Posterior cingulate gyrus (tissue), 11 donors: ENCODE measurements at regions of chr11 and their contacts with region 1.

Region 1: GRCh38 chr11:95067039-95067840 is 521 bp downstream of the SRSF8 start:
- DNase-seq: peak; percentile 73 to 97 (median 84)

Region 2: GRCh38 chr11:94948070-94948617 is 119.1 kb before region 1 on chr11:
- intact Hi-C with region 1: no loop called
- DNase-seq: no peak

Region 3: GRCh38 chr11:94973099-94973968 is 93.9 kb before region 1 on chr11 and contains the starts of genes CWC15 and KDM4D:
- intact Hi-C with region 1: loop called (anchors 5 kb)
- DNase-seq: peak; percentile 92 to 99 (median 96)

Region 4: DNA sequence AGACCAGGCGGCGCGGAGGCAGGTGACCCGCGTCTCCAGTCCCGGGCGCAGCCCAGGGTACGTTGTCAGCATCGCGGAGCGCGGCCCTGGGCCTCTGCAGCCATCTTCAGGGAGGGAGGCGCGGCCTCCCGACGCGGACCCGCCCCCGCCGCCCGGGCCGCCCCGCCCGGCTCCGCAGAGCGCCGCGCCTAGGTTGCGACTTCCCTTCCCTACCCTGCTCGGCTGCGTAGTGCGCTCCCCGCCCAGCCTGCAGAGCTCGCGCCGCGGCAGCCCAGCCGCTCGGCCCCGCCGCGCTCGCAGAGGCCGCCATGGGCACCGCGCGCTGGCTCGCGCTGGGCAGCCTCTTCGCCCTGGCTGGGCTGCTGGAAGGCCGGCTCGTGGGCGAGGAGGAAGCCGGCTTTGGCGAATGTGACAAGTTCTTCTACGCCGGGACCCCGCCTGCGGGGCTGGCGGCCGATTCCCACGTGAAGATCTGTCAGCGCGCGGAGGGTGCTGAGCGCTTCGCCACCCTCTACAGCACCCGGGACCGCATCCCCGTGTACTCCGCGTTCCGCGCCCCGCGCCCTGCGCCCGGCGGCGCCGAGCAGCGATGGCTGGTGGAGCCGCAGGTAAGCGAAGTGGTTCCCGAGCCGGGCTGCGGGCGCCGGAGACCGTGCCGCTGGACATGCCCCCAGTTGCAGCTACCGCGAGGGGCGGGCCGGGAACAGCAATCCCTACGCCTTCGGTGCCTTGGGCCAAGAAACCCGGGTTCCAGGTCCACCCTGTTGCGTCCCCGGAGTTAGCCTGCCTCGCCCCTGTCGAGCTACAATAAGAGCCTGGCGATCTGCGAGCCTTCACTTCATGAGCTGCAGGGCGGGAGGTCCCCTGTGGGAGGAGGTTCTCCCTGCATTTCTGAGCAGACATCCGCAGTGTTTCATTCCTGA is 22.6 kb after region 1 on chr11 and contains the start of gene ENDOD1:
- intact Hi-C with region 1: loop called (anchors 1 kb)
- DNase-seq: peak; percentile 74 to 98 (median 80)

Region 5: GRCh38 chr11:95165638-95166037 is 98.4 kb after region 1 on chr11:
- intact Hi-C with region 1: no loop called
- DNase-seq: no peak